Head of caudate nucleus (tissue), 42 donors: ENCODE measurements at regions of chr17 and their contacts with region 1.

Region 1: GRCh38 chr17:1455797-1456599 is at the start of gene CRK:
- DNase-seq: peak; percentile 89 to 99 (median 97)

Region 2: DNA sequence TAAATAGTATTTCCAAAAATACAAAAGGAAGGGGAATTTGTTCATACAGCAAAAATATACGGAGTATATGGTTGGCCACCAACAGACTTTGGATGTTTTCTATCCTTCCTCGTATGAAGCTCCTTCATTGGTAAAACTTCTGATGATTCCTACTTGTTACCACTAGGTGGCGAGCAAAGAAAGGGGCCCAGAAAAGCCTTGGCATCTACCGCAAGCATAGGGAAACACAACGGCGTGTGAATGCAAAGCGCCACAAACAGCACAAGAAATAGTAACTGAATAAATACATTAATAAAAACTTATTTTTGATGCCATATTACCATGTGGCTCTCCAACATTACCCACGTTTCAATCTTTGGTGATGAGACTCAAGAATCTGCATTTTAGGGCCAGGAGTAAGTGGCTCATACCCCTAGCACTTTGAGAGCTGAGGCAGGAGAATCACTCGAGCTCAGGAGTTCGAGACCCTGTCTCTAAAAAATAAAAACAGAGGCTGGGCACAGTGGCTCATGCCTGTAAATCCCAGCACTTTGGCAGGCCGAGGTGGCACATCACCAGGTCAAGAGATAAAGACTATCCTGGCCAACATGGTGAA is 90.5 kb before region 1 on chr17:
- intact Hi-C with region 1: loop called (anchors 10 kb)
- DNase-seq: peak in 41 of 42 donors; percentile 25 to 86 (median 59)

Region 3: GRCh38 chr17:1399679-1400512 is 56.1 kb before region 1 on chr17 and contains the start of gene YWHAE:
- intact Hi-C with region 1: loop called (anchors 10 kb)
- DNase-seq: peak; percentile 91 to 99 (median 97)

Region 4: DNA sequence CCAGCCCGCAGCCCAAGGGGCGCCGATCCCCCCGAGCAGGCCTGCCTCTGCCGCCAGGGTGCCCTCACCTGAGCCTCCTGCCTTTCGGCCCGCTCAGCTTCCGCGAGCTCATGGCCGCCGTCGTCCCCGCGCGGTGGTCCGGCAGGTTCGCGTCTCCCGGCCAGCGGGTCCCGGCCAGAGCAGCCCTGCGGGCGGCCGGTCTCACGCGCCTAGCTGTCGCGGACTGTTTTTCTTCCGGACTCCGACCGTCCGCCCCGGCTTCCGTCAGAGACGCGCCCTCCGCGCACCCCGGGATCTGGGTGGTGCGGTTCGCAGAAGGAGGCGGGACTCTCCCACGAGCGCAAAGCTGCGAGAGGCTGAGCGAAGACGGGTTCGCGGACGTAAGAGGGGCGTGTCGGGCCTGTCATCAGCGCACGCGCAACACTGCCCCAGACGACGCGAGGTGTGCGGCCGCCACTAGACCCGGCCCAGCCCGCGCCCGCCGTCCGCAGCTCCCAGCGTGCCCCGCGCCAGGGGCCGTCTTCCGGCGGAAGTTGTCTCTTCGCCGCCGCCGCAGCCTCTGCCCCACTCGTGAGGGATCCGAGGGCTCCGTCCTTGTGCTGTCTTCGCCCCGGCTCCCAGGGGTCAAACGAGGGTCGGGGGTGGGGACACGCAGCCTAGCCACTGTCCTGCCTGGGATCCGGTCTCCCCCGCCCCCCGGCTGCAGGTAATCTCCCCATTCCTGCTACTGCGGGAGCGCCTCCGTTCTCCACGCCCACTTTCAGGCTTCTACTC is 60.6 kb after region 1 on chr17 and contains the start of gene INPP5K:
- intact Hi-C with region 1: loop called (anchors 2 kb)
- DNase-seq: peak; percentile 96 to 100 (median 99)